ENCODE measurements at regions of chr3 and their contacts with region 1.

Region 1: GRCh38 chr3:184362668-184363540 is 1.4 kb downstream of the POLR2H start:
- DNase-seq: peak; percentile 94
- H3K4me3 ChIP-seq: peak overlapping the region; percentile 91 to 96
- H3K27ac ChIP-seq: peak overlapping the region; percentile 97 to 99
- H3K4me1 ChIP-seq: peaks cover 12 to 19% of the 10 kb centered on the region in 2 experiments; a peak in 3 of 4 replicates
- H3K27me3 ChIP-seq: no peaks in the 10 kb centered on the region
- CTCF ChIP-seq: peak; percentile 57
- EP300 ChIP-seq: 0 out of 4 replicates have a peak, but pooled peaks of 1 of the 2 experiments have one; percentile 3
- RAD21 ChIP-seq: no peak; the same call in 1 of the 2 replicates

Region 2: GRCh38 chr3:184209146-184209923 is 153.6 kb before region 1 on chr3:
- CTCF ChIA-PET with region 1: no interaction called
- POLR2A ChIA-PET with region 1: no interaction called
- DNase-seq: no peak
- H3K4me3 ChIP-seq: no peak overlapping the region
- H3K27ac ChIP-seq: no peak overlapping the region
- H3K4me1 ChIP-seq: peaks cover 0 to 3% of the 10 kb centered on the region in 2 experiments; a peak in 1 of 4 replicates
- H3K27me3 ChIP-seq: peaks cover 15% of the 10 kb centered on the region
- CTCF ChIP-seq: no peak
- EP300 ChIP-seq: no peak
- RAD21 ChIP-seq: no peak

Region 3: GRCh38 chr3:184345317-184346144 is 17.4 kb before region 1 on chr3:
- CTCF ChIA-PET with region 1: interaction called, 5 read pairs
- POLR2A ChIA-PET with region 1: interaction called, 11 read pairs
- DNase-seq: peak; percentile 73
- H3K4me3 ChIP-seq: no peak overlapping the region
- H3K27ac ChIP-seq: no peak overlapping the region
- H3K4me1 ChIP-seq: peaks cover 0 to under 1% of the 10 kb centered on the region in 2 experiments; a peak in 2 of 4 replicates
- H3K27me3 ChIP-seq: no peaks in the 10 kb centered on the region
- CTCF ChIP-seq: peak; percentile 54
- EP300 ChIP-seq: no peak
- RAD21 ChIP-seq: no peak; the same call in 1 of the 2 replicates

Measured in SK-N-SH (cell line).